K562 (cell line): ENCODE measurements at regions of chr1 and their contacts with region 1.

Region 1: DNA sequence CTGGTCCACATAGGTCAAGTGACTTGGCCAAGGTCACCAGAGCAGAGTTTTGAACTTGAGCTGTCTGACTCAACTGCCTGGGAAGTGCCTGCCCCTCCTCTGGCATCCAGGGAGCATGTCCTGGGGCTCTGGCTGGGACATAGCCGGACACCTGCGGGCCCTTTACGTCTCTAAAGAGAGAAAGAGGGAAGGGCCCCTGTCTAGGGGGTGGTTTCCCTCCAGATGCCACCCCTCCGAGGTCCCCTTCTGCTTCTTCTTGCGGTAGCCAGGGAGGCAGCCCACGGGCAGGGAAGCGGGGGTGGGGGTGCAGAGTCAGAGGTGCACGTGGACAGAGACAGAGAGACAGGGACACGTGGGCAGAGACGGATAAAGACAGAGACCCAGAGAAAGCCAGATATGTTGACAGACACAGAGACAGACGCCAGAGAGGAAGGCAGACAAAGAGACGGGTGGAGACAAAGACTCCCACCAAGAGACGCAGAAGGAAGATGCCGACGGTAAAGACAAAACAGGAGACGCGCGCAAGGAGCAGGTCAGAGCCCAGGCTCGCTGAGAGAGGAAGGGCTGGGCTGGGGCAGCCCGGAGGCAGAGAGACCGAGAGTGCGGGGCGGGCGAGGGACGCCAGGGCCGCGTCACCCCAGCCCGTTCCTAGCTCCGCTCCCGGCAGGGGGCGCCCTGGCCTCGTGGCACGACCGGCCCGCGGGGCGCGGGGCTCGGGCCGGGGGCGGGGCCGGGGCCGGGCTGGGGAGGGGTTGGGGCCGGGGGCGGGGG is 458 bp upstream of the ALPL start:
- DNase-seq: peak; percentile 82 to 98 (median 94)
- ATAC-seq: peak; percentile 97
- H3K4me3 ChIP-seq: no peak overlapping the region
- H3K27ac ChIP-seq: no peak overlapping the region
- H3K4me1 ChIP-seq: peaks cover 0 to 14% of the 10 kb centered on the region in 2 experiments; a peak in 3 of 5 replicates
- H3K27me3 ChIP-seq: peaks cover 30 to 45% of the 10 kb centered on the region in 2 experiments
- CTCF ChIP-seq: peak; percentile 64 to 82 (median 75)
- EP300 ChIP-seq: no peak
- POLR2A ChIP-seq: no peak
- RAD21 ChIP-seq: peak; percentile 44 to 74

Region 2: GRCh38 chr1:21586846-21587601 is 78.3 kb after region 1 on chr1:
- CTCF ChIA-PET with region 1: no interaction called
- POLR2A ChIA-PET with region 1: no interaction called
- in situ Hi-C with region 1: loop called (anchors 5 kb)
- intact Hi-C with region 1: loop called (anchors 10 kb)
- DNase-seq: peak; percentile 81 to 90 (median 86)
- ATAC-seq: peak; percentile 71
- H3K4me3 ChIP-seq: no peak overlapping the region
- H3K27ac ChIP-seq: no peak overlapping the region
- H3K4me1 ChIP-seq: peaks cover 21 to 36% of the 10 kb centered on the region in 2 experiments; a peak in 4 of 5 replicates
- H3K27me3 ChIP-seq: peaks cover 10 to 37% of the 10 kb centered on the region in 2 experiments
- CTCF ChIP-seq: peak in 2 of 3 experiments; percentile 21 to 24; a peak in 3 of 6 replicates
- EP300 ChIP-seq: no peak
- POLR2A ChIP-seq: no peak
- RAD21 ChIP-seq: peak in 1 of 2 experiments; percentile 29; a peak in 2 of 4 replicates

Region 3: GRCh38 chr1:21594935-21595897 is 86.5 kb after region 1 on chr1:
- CTCF ChIA-PET with region 1: interaction called, 8 read pairs
- POLR2A ChIA-PET with region 1: no interaction called
- in situ Hi-C with region 1: no loop called
- intact Hi-C with region 1: loop called (anchors 10 kb)
- DNase-seq: peak; percentile 81 to 87 (median 83)
- ATAC-seq: peak; percentile 83
- H3K4me3 ChIP-seq: no peak overlapping the region
- H3K27ac ChIP-seq: no peak overlapping the region
- H3K4me1 ChIP-seq: peaks cover 6 to 58% of the 10 kb centered on the region in 2 experiments; a peak in 3 of 5 replicates
- H3K27me3 ChIP-seq: 0 out of 5 replicates have a peak, but pooled peaks cover 0 to 7% of the 10 kb centered on the region in 2 experiments
- CTCF ChIP-seq: peak; percentile 89 to 95 (median 92)
- EP300 ChIP-seq: no peak
- POLR2A ChIP-seq: peak; percentile 51; the same call in 1 of the 2 replicates
- RAD21 ChIP-seq: peak; percentile 72 to 90

Region 4: DNA sequence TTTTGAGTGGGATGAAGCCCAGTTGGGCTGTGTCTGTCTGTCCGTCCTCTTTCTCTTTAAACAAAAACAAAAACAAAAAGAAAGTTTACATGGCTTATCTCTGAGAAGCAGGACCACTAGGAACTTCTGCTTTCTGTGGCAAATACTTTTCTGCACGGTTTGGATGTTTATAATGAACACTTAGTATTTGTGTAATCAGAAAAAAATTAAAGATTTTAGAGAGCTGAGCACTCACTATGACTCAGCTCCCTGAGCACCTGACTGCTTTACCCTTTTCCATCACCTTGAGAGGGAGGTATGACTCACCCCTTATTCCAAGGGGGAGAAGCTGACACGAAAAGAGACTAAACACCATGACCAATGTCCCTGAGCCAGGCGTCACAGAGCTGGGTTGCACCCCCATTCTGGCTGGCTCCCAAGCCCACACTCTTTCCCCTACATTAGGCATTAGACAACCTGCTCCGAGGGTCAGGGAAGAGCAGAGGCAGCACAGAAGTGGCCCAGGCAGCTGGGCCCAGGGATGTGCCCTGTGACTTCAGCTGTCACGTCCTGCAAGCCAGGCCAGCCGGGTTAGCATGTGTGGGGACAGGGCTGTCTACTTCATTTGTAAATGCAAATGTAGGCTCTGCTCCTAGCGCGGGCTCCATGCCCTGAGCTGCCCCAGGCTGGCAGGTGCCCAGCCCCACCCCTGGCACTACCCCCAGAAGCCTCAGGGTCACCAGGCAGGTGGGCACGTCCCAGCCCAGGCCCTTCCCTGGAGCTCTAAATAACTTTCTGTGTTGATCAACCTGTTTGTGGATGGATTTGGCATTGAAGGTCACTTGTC is 130.0 kb after region 1 on chr1:
- CTCF ChIA-PET with region 1: no interaction called
- POLR2A ChIA-PET with region 1: no interaction called
- in situ Hi-C with region 1: no loop called
- intact Hi-C with region 1: no loop called
- DNase-seq: peak; percentile 79 to 89 (median 83)
- ATAC-seq: peak; percentile 81
- H3K4me3 ChIP-seq: no peak overlapping the region
- H3K27ac ChIP-seq: peak overlapping the region; percentile 78
- H3K4me1 ChIP-seq: peaks cover 44 to 59% of the 10 kb centered on the region in 2 experiments
- H3K27me3 ChIP-seq: no peaks in the 10 kb centered on the region
- CTCF ChIP-seq: no peak
- EP300 ChIP-seq: peak; percentile 72
- POLR2A ChIP-seq: no peak
- RAD21 ChIP-seq: no peak

Region 5: DNA sequence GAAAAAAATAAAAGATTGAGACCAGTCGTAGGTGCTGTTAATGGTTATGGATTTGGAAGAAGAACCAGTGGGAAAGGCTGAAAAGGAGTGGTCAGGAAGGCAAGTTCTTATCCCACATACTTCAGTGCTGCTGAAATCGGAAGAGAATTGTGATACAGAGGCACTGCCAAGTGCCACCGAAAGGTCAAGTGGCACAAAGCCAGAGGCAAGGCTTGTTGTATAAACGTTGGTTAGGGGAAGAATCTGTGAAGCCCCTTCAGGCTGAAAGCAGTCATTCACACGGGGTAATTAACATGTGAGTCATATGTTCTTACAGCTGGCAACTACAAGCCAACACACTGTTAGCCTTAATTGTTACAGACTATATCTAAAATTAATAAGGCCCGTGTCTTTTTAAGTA is 991.7 kb after region 1 on chr1:
- CTCF ChIA-PET with region 1: no interaction called
- POLR2A ChIA-PET with region 1: no interaction called
- in situ Hi-C with region 1: no loop called
- intact Hi-C with region 1: no loop called
- DNase-seq: no peak
- ATAC-seq: no peak
- H3K4me3 ChIP-seq: no peak overlapping the region
- H3K27ac ChIP-seq: no peak overlapping the region
- H3K4me1 ChIP-seq: no peaks in the 10 kb centered on the region
- H3K27me3 ChIP-seq: no peaks in the 10 kb centered on the region
- CTCF ChIP-seq: no peak
- EP300 ChIP-seq: no peak
- POLR2A ChIP-seq: no peak
- RAD21 ChIP-seq: no peak